Activated naive CD4-positive, alpha-beta T cell treated with anti-CD3 and anti-CD28 coated beads for 36 hours (primary cell): ENCODE measurements at regions of chr1 and their contacts with region 1.

Region 1: GRCh38 chr1:18630511-18631495 is at the start of gene PAX7:
- DNase-seq: no peak
- H3K4me3 Mint-ChIP-seq: no peak within 1 kb of the TSS
- H3K27ac Mint-ChIP-seq: no peak within 1 kb of the TSS
- H3K4me1 Mint-ChIP-seq: peaks cover 31% of the 10 kb centered on the region
- H3K27me3 Mint-ChIP-seq: peaks cover 70% of the 10 kb centered on the region
- total RNA-seq, gene PAX7: not detected

Region 2: GRCh38 chr1:18642278-18643095 is 11.7 kb after region 1 on chr1:
- CTCF ChIA-PET with region 1: no interaction called
- intact Hi-C with region 1: loop called (anchors 1 kb)
- DNase-seq: no peak
- H3K4me3 Mint-ChIP-seq: no peak overlapping the region
- H3K27ac Mint-ChIP-seq: no peak overlapping the region
- H3K4me1 Mint-ChIP-seq: peaks cover 56% of the 10 kb centered on the region
- H3K27me3 Mint-ChIP-seq: peaks cover 86% of the 10 kb centered on the region

Region 3: GRCh38 chr1:18783705-18784481 is 153.1 kb after region 1 on chr1:
- CTCF ChIA-PET with region 1: no interaction called
- intact Hi-C with region 1: no loop called
- DNase-seq: no peak
- H3K4me3 Mint-ChIP-seq: no peak overlapping the region
- H3K27ac Mint-ChIP-seq: no peak overlapping the region
- H3K4me1 Mint-ChIP-seq: no peaks in the 10 kb centered on the region
- H3K27me3 Mint-ChIP-seq: peaks cover 19% of the 10 kb centered on the region